ENCODE measurements at regions of chr3 and their contacts with region 1.

Region 1: DNA sequence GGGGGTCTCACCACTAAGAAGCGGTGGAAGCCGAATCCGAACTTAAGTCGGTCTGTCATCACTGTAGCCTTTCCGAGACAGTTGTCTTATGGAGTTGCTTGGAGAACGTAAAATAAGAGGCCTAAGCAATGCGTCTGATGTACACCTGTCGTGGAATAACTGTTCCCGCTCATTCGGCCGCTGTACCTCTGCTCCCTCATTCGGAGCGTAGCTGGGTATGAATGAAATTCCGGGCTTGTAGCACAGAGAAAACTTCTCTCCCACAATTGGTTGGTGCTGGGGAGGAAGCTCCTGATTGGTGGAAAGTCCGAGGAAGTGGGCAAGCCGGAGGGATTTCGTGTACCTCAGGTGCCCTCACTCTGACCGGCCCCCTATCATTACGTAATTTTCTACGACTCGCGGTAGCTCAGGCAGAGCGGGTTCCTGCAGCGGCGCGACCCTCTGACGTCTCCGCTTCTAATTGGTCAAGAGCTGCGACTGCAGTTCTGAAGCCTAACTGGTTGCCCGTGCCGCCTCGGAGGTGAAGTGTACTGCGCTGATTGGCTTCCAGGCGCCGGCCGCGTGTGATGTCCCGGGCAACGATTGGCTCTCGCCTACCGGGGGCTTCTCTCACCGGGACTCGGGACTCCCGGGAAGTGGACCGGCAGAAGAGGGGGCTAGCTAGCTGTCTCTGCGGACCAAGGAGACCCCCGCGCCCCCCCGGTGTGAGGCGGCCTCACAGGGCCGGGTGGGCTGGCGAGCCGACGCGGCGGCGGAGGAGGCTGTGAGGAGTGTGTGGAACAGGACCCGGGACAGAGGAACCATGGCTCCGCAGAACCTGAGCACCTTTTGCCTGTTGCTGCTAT is at the start of gene DNAJB11:
- DNase-seq: peak; percentile 99 to 100
- H3K4me3 ChIP-seq: peak within 1 kb of the TSS; percentile 80
- H3K27ac ChIP-seq: peak within 1 kb of the TSS; percentile 80
- H3K4me1 ChIP-seq: peaks cover 31% of the 10 kb centered on the region
- H3K27me3 ChIP-seq: no peaks in the 10 kb centered on the region
- CTCF ChIP-seq: no peak
- total RNA-seq, gene DNAJB11: 53.8 and 71.3 TPM in 2 replicates

Region 2: DNA sequence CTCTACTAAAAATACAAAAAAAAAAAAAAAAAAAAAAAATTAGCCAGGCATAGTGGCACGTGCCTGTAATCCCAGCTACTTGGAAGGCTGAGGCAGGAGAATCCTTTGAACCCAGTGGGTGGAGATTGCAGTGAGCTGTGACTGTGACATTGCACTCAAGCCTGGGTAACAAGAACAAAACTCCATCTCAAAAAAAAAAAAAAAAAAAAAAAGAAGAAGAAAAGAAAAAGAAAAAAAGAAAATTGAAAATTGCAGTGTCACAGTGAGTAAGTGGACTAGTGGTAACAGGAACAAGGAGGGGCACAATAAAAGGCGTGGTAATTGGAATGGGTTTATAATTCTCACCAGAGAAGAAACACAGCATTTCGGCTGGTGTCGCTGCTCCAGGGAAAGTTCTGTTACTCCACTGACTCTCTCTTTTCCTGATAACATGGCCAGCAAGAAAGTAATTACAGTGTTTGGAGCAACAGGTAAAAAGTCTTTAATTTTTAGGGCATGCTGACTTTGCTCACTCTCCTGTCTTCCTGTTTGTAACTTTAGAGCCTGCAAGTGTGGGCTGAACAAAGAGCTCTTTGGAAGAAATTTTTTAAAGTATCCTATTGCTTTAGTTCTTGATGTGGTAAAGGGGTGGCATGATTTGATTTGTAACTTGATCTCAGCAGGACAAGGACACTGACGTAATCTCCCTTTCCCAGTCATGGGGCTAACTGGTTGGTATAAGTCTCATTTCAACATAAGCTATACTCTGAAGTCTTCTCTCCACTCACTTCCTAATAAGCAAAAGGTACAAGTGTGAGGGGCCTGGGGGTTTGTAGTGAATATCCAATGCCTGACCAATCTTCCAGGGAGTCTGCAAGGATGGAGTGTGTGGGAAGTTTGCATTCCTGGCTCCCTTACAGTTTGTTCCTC is 610.5 kb before region 1 on chr3:
- CTCF ChIA-PET with region 1: no interaction called
- POLR2A ChIA-PET with region 1: interaction called, 10 read pairs
- intact Hi-C with region 1: no loop called
- DNase-seq: peak; percentile 74 to 91
- H3K4me3 ChIP-seq: peak overlapping the region; percentile 77
- H3K27ac ChIP-seq: peak overlapping the region; percentile 96
- H3K4me1 ChIP-seq: peaks cover 49% of the 10 kb centered on the region
- H3K27me3 ChIP-seq: no peaks in the 10 kb centered on the region
- CTCF ChIP-seq: peak; percentile 11; the same call in 1 of the 2 replicates

Region 3: GRCh38 chr3:186315581-186316354 is 254.6 kb before region 1 on chr3:
- CTCF ChIA-PET with region 1: no interaction called
- POLR2A ChIA-PET with region 1: no interaction called
- intact Hi-C with region 1: no loop called
- DNase-seq: no peak
- H3K4me3 ChIP-seq: no peak overlapping the region
- H3K27ac ChIP-seq: no peak overlapping the region
- H3K4me1 ChIP-seq: no peaks in the 10 kb centered on the region
- H3K27me3 ChIP-seq: peaks cover 91% of the 10 kb centered on the region
- CTCF ChIP-seq: no peak

Region 4: DNA sequence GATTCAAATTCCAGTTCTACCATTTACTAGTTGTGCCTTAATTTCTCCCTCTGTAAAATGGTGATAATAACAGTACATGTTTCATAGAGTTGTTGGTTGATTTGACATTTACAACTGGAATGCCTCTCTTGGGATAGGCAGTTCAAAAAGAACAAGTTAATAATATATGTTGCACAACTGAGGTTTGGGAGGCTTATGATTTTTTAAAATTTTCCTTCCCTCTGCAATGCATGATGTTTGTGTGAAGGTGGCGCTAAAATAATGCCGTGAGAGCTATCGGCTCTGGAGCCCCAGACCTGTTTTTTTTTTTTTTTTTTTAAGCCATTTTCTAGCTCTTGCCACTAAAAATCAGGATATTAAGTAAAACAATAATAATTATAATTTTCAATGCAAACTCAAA is 18.8 kb after region 1 on chr3:
- CTCF ChIA-PET with region 1: interaction called, 3 read pairs
- POLR2A ChIA-PET with region 1: interaction called, 34 read pairs
- intact Hi-C with region 1: loop called (anchors 1 kb)
- DNase-seq: peak; percentile 18 to 62
- H3K4me3 ChIP-seq: peak overlapping the region; percentile 38; the same call in 1 of the 2 replicates
- H3K27ac ChIP-seq: peak overlapping the region; percentile 87
- H3K4me1 ChIP-seq: peaks cover 40% of the 10 kb centered on the region
- H3K27me3 ChIP-seq: no peaks in the 10 kb centered on the region
- CTCF ChIP-seq: peak; percentile 40; the same call in 1 of the 2 replicates

Region 5: GRCh38 chr3:186625600-186626042 is 55.3 kb after region 1 on chr3:
- CTCF ChIA-PET with region 1: no interaction called
- POLR2A ChIA-PET with region 1: no interaction called
- intact Hi-C with region 1: no loop called
- DNase-seq: no peak
- H3K4me3 ChIP-seq: no peak overlapping the region
- H3K27ac ChIP-seq: no peak overlapping the region
- H3K4me1 ChIP-seq: no peaks in the 10 kb centered on the region
- H3K27me3 ChIP-seq: no peaks in the 10 kb centered on the region
- CTCF ChIP-seq: no peak

Region 6: GRCh38 chr3:186717039-186717457 is 146.7 kb after region 1 on chr3 and contains the start of gene KNG1:
- CTCF ChIA-PET with region 1: no interaction called
- POLR2A ChIA-PET with region 1: interaction called, 25 read pairs
- intact Hi-C with region 1: no loop called
- DNase-seq: no peak
- H3K4me3 ChIP-seq: no peak within 1 kb of the TSS
- H3K27ac ChIP-seq: no peak within 1 kb of the TSS
- H3K4me1 ChIP-seq: no peaks in the 10 kb centered on the region
- H3K27me3 ChIP-seq: no peaks in the 10 kb centered on the region
- CTCF ChIP-seq: no peak
- total RNA-seq, gene KNG1: not detected in 2 replicates

Region 7: GRCh38 chr3:186760141-186760813 is 190.0 kb after region 1 on chr3:
- CTCF ChIA-PET with region 1: no interaction called
- POLR2A ChIA-PET with region 1: no interaction called
- intact Hi-C with region 1: loop called (anchors 1 kb)
- DNase-seq: peak; percentile 65 to 100
- H3K4me3 ChIP-seq: no peak overlapping the region
- H3K27ac ChIP-seq: peak overlapping the region; percentile 71
- H3K4me1 ChIP-seq: peaks cover 21% of the 10 kb centered on the region
- H3K27me3 ChIP-seq: no peaks in the 10 kb centered on the region
- CTCF ChIP-seq: no peak

Region 8: GRCh38 chr3:186806089-186807055 is 236.1 kb after region 1 on chr3 and contains the start of gene RFC4:
- CTCF ChIA-PET with region 1: interaction called, 3 read pairs
- POLR2A ChIA-PET with region 1: interaction called, 5 read pairs
- intact Hi-C with region 1: loop called (anchors 5 kb)
- DNase-seq: peak; percentile 74 to 87
- H3K4me3 ChIP-seq: peak within 1 kb of the TSS; percentile 89
- H3K27ac ChIP-seq: peak within 1 kb of the TSS; percentile 79
- H3K4me1 ChIP-seq: peaks cover 29% of the 10 kb centered on the region
- H3K27me3 ChIP-seq: no peaks in the 10 kb centered on the region
- CTCF ChIP-seq: no peak
- total RNA-seq, gene RFC4: 93.8 and 94.5 TPM in 2 replicates

Region 9: DNA sequence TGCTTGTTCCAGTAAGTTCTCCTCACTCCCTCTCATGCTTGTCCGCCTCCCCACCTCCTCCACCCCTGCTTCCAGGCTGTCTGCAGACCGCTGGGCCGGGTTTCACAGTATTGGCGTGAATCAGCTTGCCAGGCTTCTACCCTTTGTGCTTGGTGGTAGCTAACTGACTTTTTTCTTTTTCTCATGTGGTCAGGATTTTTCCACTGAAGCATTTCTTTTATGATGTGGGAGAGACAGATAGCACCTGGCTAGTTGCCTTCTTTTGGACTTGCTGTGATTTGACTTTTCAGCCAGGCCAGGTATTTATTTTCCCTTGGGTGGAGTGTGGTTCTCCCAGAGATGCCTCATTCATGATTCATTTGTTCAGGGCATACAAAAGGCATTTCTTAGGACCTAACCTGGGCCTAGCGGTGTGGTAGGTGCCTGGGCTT is 420.6 kb after region 1 on chr3:
- CTCF ChIA-PET with region 1: no interaction called
- POLR2A ChIA-PET with region 1: interaction called, 13 read pairs
- intact Hi-C with region 1: no loop called
- DNase-seq: peak; percentile 79 to 95
- H3K4me3 ChIP-seq: no peak overlapping the region
- H3K27ac ChIP-seq: peak overlapping the region; percentile 73
- H3K4me1 ChIP-seq: peaks cover 31% of the 10 kb centered on the region
- H3K27me3 ChIP-seq: no peaks in the 10 kb centered on the region
- CTCF ChIP-seq: no peak